AG04450 (cell line): ENCODE measurements at regions of chr20 and their contacts with region 1.

Region 1: DNA sequence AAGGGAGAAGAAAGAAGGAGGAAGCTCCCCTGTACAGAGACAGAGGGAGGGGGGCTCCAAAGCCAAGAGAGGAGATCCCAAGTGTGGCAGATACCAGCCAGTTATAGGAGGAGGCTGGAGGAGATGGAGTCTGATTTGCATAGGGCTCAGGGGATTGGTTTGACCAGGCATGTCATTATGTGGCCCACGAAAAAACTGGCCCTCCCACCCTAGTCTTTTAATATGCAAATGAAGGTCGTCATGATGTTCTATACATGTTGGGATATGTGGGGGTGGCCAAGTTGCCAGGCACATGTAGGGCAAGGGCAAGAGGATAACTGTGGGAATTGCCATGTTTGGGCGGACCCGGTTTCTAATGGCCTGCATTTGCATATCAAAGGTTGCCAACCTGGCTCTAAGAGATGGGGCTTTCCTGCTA is 17.6 kb upstream of the ZFP64 start:
- DNase-seq: no peak
- H3K4me3 ChIP-seq: no peak overlapping the region
- H3K27ac ChIP-seq: no peak overlapping the region
- H3K27me3 ChIP-seq: no peaks in the 10 kb centered on the region
- CTCF ChIP-seq: no peak

Region 2: GRCh38 chr20:51608061-51608460 is 601.1 kb before region 1 on chr20:
- CTCF ChIA-PET with region 1: no interaction called
- POLR2A ChIA-PET with region 1: no interaction called
- DNase-seq: no peak
- H3K4me3 ChIP-seq: no peak overlapping the region
- H3K27ac ChIP-seq: no peak overlapping the region
- H3K27me3 ChIP-seq: no peaks in the 10 kb centered on the region
- CTCF ChIP-seq: no peak

Region 3: DNA sequence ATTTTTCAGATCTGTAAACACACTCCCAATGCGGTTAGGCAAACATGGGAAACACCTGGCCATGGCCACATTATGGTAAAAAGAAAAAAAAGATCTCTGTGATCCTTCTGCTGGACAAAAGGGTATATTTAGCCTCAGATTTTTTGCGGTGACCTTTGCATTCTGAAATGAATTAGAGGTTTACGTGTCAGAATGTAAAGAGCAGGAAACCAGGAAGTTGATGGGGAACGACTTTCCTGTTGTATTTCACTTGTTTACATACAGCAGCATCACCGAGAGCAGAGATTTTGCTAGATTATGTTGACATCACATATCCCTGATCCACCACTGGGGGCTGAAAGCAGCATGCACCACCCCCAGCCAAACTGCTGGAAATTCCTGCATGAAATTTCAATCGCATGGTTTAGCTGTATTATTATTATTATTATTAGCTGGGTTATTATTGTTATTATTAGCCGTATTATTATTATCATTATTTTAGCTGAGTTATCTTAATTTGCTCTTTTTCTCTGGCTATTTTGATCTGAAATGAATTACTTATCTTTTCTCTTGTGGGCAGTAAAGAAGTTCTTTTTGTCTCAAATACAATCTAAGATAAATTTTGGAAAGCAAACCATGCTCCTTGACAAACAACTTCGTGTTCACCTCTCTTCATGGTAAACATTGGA is 207.0 kb before region 1 on chr20:
- CTCF ChIA-PET with region 1: no interaction called
- POLR2A ChIA-PET with region 1: no interaction called
- DNase-seq: no peak
- H3K4me3 ChIP-seq: no peak overlapping the region
- H3K27ac ChIP-seq: no peak overlapping the region
- H3K27me3 ChIP-seq: no peaks in the 10 kb centered on the region
- CTCF ChIP-seq: peak; percentile 40

Region 4: GRCh38 chr20:52060794-52061714 is 148.1 kb before region 1 on chr20:
- CTCF ChIA-PET with region 1: no interaction called
- POLR2A ChIA-PET with region 1: no interaction called
- DNase-seq: no peak
- H3K4me3 ChIP-seq: no peak overlapping the region
- H3K27ac ChIP-seq: no peak overlapping the region
- H3K27me3 ChIP-seq: no peaks in the 10 kb centered on the region
- CTCF ChIP-seq: peak; percentile 33

Region 5: DNA sequence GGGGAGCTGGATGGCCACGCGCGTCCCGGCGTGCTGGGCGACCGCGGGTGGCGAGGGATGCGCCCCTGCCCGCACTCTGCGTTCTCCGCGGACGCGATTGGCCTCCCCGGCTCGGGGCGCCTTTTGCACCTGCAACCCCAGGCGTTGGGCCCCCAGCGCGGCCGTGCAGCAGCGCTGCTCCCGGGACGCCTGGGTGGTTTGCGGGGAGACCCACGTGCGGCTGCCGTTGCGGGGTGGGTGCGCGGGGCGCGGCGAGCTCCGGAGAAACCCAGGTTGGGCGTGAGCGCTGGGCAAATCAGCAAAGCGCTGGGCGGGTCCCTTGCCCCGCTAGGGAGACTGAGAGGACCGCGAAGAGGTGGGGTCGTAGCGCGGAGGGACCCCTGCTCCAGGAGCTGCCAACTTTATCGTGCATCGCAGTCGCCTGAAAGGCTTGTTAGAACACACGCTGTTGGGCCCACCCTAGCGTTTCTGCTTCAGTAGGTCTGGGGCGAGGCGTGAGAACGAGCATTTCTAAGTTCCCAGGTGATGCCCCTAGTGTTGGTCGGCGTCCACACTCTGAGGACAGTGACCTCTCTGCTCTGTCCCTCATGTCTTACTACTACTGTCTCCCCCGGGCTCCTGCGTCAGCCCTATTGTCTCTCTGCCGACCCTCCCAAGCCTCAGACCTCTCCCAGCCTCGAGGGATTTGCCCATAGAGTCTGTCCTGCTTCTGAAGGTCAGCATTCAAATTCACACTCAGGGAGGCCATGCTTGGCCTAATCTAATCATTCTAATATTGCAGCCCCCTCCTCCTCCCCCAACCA is 17.0 kb before region 1 on chr20:
- CTCF ChIA-PET with region 1: interaction called, 15 read pairs
- POLR2A ChIA-PET with region 1: interaction called, 3 read pairs
- DNase-seq: no peak
- H3K4me3 ChIP-seq: peak overlapping the region; percentile 85
- H3K27ac ChIP-seq: no peak overlapping the region
- H3K27me3 ChIP-seq: no peaks in the 10 kb centered on the region
- CTCF ChIP-seq: no peak

Region 6: DNA sequence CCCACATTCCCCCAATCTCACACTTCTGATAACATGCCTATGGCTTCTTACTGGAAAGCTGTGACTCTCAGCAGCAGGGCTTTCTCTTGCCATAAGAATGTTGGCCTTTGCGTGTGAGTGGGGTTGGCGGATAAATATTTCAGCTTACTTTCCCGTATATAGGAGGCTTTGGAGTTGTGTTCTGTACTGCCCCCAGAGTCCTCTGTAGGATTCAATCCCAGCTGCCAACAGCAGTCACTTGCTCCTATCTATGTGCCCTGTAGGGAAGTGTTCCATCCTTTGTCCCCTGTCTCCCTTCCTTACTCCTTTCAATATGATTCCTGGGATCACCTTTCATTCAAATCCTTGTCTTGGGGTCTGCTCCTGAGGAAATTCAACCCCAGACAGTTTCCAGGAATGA is 304.7 kb after region 1 on chr20:
- CTCF ChIA-PET with region 1: no interaction called
- POLR2A ChIA-PET with region 1: no interaction called
- DNase-seq: no peak
- H3K4me3 ChIP-seq: no peak overlapping the region
- H3K27ac ChIP-seq: no peak overlapping the region
- H3K27me3 ChIP-seq: no peaks in the 10 kb centered on the region
- CTCF ChIP-seq: no peak